GM12878 (cell line): ENCODE measurements at regions of chr5 and their contacts with region 1.

Region 1: GRCh38 chr5:143023411-143024096 is 253.4 kb downstream of the ARHGAP26 start:
- DNase-seq: peak; percentile 87
- ATAC-seq: peak; percentile 65
- H3K4me3 ChIP-seq: 0 out of 2 replicates have a peak overlapping the region, but pooled peaks have one; percentile 21
- H3K27ac ChIP-seq: peak overlapping the region; percentile 95
- H3K4me1 ChIP-seq: peaks cover 77% of the 10 kb centered on the region
- H3K27me3 ChIP-seq: no peaks in the 10 kb centered on the region
- CTCF ChIP-seq: no peak; a peak in 1 of 6 replicates
- EP300 ChIP-seq: peak; percentile 52 to 66; a peak in 2 of 4 replicates
- POLR2A ChIP-seq: peak; percentile 60
- RAD21 ChIP-seq: peak; percentile 36

Region 2: DNA sequence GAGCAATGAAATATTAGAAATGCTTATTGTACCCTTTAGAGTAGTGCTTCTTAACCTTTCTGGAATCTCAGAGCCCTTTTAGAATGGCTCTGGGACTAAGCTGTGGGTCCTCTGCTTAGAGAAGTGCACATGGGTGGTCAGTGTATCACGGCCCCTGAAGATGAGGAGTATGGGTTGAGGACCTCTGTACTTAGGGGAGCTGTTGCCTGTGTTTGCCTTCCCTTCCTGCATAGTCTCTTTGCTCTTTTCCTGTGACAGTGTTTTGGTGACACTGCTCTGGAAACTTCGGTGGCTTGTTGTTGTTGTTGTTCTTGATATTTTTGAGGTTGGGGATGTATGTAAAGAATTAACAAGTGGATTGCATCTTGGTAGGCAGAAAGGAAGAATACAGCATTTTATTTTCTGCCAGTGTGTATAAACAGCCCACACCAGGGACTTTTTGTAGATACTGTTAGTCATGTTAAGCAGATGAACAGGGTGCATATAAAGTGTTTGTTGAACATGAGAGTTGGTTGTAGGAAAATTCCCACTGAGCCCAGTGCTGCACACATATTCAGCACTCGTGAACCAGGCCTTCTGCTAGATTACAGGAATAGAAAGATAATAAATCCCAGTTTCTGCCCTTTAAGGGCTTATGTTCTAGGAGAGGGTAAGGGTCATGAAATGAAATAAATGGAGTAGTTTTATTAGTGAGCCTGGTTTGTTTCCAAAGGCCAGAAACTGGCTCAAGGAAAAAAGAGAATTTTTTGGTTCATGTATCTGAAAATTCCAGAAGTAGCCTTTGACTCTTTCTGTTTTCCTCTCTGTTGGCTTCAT is 53.7 kb before region 1 on chr5:
- CTCF ChIA-PET with region 1: no interaction called
- POLR2A ChIA-PET with region 1: no interaction called
- RAD21 ChIA-PET with region 1: no interaction called
- SMC1A ChIA-PET with region 1: no interaction called
- in situ Hi-C with region 1: no loop called
- intact Hi-C with region 1: no loop called
- DNase-seq: no peak
- ATAC-seq: no peak; the same call in 2 of the 3 replicates
- H3K4me3 ChIP-seq: no peak overlapping the region
- H3K27ac ChIP-seq: no peak overlapping the region
- H3K4me1 ChIP-seq: peaks cover 9% of the 10 kb centered on the region
- H3K27me3 ChIP-seq: no peaks in the 10 kb centered on the region
- CTCF ChIP-seq: no peak
- EP300 ChIP-seq: no peak
- POLR2A ChIP-seq: no peak
- RAD21 ChIP-seq: no peak

Region 3: GRCh38 chr5:143051244-143052058 is 27.9 kb after region 1 on chr5:
- CTCF ChIA-PET with region 1: interaction called, 12 read pairs
- POLR2A ChIA-PET with region 1: interaction called, 12 read pairs
- RAD21 ChIA-PET with region 1: interaction called, 337 read pairs
- SMC1A ChIA-PET with region 1: interaction called, 441 read pairs
- in situ Hi-C with region 1: no loop called
- intact Hi-C with region 1: loop called (anchors 2 kb)
- DNase-seq: no peak
- ATAC-seq: peak; percentile 10
- H3K4me3 ChIP-seq: no peak overlapping the region
- H3K27ac ChIP-seq: no peak overlapping the region; the same call in 1 of the 2 replicates
- H3K4me1 ChIP-seq: peaks cover 38% of the 10 kb centered on the region
- H3K27me3 ChIP-seq: no peaks in the 10 kb centered on the region
- CTCF ChIP-seq: no peak
- EP300 ChIP-seq: no peak
- POLR2A ChIP-seq: no peak
- RAD21 ChIP-seq: no peak

Region 4: GRCh38 chr5:143094087-143094521 is 70.5 kb after region 1 on chr5:
- CTCF ChIA-PET with region 1: interaction called, 5 read pairs
- POLR2A ChIA-PET with region 1: interaction called, 6 read pairs
- RAD21 ChIA-PET with region 1: interaction called, 11 read pairs
- SMC1A ChIA-PET with region 1: interaction called, 7 read pairs
- in situ Hi-C with region 1: no loop called
- intact Hi-C with region 1: no loop called
- DNase-seq: no peak
- ATAC-seq: peak; percentile 62
- H3K4me3 ChIP-seq: peak overlapping the region; percentile 54
- H3K27ac ChIP-seq: peak overlapping the region; percentile 34; the same call in 1 of the 2 replicates
- H3K4me1 ChIP-seq: no peaks in the 10 kb centered on the region
- H3K27me3 ChIP-seq: no peaks in the 10 kb centered on the region
- CTCF ChIP-seq: 0 out of 6 replicates have a peak, but pooled peaks of 1 of the 3 experiments have one; percentile 8
- EP300 ChIP-seq: no peak
- POLR2A ChIP-seq: no peak
- RAD21 ChIP-seq: peak; percentile 43

Region 5: GRCh38 chr5:143161893-143162540 is 138.5 kb after region 1 on chr5:
- CTCF ChIA-PET with region 1: interaction called, 4 read pairs
- POLR2A ChIA-PET with region 1: interaction called, 4 read pairs
- RAD21 ChIA-PET with region 1: interaction called, 17 read pairs
- SMC1A ChIA-PET with region 1: interaction called, 8 read pairs
- in situ Hi-C with region 1: no loop called
- intact Hi-C with region 1: no loop called
- DNase-seq: no peak
- ATAC-seq: no peak
- H3K4me3 ChIP-seq: no peak overlapping the region
- H3K27ac ChIP-seq: no peak overlapping the region
- H3K4me1 ChIP-seq: no peaks in the 10 kb centered on the region; the same call in 1 of the 2 replicates
- H3K27me3 ChIP-seq: no peaks in the 10 kb centered on the region
- CTCF ChIP-seq: no peak
- EP300 ChIP-seq: no peak
- POLR2A ChIP-seq: no peak
- RAD21 ChIP-seq: no peak

Region 6: DNA sequence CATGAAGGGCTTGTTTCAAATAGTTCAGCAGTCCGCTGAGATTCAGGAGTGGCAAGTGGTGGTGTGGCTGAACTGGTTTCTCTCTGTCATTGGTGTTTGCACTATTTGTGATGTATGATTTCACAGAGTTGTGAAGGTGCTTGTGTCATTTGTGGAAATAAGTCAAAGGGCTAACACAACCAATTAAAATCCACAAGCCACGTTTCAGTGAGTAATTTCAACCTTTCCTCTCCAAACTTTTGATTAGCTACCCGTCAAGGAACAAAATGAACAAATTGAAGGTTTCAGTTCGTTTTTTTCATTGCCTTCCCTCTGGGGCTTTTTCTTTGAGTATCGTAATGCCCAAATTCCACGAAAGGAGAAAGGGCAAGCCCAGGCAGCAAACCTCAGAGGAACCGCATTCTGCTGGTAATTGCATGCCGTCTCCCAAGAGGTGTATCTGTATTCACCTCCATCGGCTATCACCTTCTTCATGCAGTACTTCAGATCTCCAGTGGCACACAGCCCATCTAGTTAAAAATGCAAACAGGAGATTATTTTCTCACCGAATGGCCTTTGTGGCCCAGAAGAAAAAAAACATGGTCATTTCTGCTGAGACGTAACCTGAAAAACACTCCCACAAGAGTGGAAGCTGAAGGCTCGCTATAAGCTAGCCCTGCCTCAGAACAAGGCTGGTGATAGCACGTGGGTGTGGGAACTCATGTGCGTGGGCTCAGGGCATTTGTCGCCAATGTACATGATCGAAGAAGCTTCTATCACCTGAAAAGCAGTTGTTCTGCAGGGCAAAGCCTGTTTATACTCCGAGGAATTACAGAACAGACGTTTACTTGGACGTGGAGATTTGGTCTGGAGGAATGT is 182.9 kb after region 1 on chr5:
- CTCF ChIA-PET with region 1: interaction called, 31 read pairs
- POLR2A ChIA-PET with region 1: interaction called, 23 read pairs
- RAD21 ChIA-PET with region 1: interaction called, 40 read pairs
- SMC1A ChIA-PET with region 1: interaction called, 138 read pairs
- in situ Hi-C with region 1: loop called (anchors 5 kb)
- intact Hi-C with region 1: loop called (anchors 2 kb)
- DNase-seq: peak; percentile 98
- ATAC-seq: peak; percentile 71
- H3K4me3 ChIP-seq: peak overlapping the region; percentile 21; the same call in 1 of the 2 replicates
- H3K27ac ChIP-seq: peak overlapping the region; percentile 94
- H3K4me1 ChIP-seq: peaks cover 52% of the 10 kb centered on the region
- H3K27me3 ChIP-seq: no peaks in the 10 kb centered on the region
- CTCF ChIP-seq: peak in 1 of 3 experiments; percentile 13; a peak in 1 of 6 replicates
- EP300 ChIP-seq: peak; percentile 76 to 91; a peak in 2 of 4 replicates
- POLR2A ChIP-seq: peak; percentile 61; the same call in 1 of the 2 replicates
- RAD21 ChIP-seq: peak; percentile 40

Region 7: GRCh38 chr5:143222287-143223231 is 199.0 kb after region 1 on chr5:
- CTCF ChIA-PET with region 1: interaction called, 20 read pairs
- POLR2A ChIA-PET with region 1: interaction called, 12 read pairs
- RAD21 ChIA-PET with region 1: interaction called, 53 read pairs
- SMC1A ChIA-PET with region 1: interaction called, 34 read pairs
- in situ Hi-C with region 1: no loop called
- intact Hi-C with region 1: no loop called
- DNase-seq: peak; percentile 82
- ATAC-seq: peak; percentile 70
- H3K4me3 ChIP-seq: no peak overlapping the region
- H3K27ac ChIP-seq: peak overlapping the region; percentile 100
- H3K4me1 ChIP-seq: peaks cover 60% of the 10 kb centered on the region
- H3K27me3 ChIP-seq: no peaks in the 10 kb centered on the region
- CTCF ChIP-seq: no peak
- EP300 ChIP-seq: 0 out of 4 replicates have a peak, but pooled peaks of 1 of the 2 experiments have one; percentile 50
- POLR2A ChIP-seq: peak; percentile 50; the same call in 1 of the 2 replicates
- RAD21 ChIP-seq: no peak; the same call in 1 of the 2 replicates